MCF 10A (cell line): ENCODE measurements at regions of chr12 and their contacts with region 1.

Region 1: GRCh38 chr12:78146365-78146772 is 315.7 kb downstream of the NAV3 start:
- DNase-seq: peak; percentile 47
- H3K4me3 Mint-ChIP-seq: no peak overlapping the region
- H3K27ac Mint-ChIP-seq: no peak overlapping the region
- H3K4me1 Mint-ChIP-seq: no peaks in the 10 kb centered on the region
- H3K27me3 Mint-ChIP-seq: no peaks in the 10 kb centered on the region
- CTCF ChIP-seq: peak; percentile 62

Region 2: DNA sequence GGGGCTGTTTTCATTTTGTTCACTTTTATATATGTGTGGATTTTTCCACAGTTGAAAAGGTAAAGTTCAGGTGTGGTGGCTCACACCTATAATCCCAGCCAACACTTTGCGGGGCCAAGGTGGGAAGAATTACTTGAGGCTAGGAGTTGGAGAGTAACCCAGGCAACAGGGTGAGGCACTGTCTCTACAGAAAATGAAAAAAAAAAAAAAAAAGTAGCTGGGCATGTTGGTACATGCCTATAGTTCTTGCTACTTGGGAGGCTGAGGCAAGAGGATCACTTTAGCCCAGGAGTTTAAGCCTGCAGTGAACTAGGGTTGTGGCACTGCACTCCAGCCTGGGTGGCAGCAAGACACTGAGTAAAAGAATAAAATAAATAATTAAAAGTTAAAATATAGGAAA is 10.8 kb after region 1 on chr12:
- CTCF ChIA-PET with region 1: interaction called, 22 read pairs
- POLR2A ChIA-PET with region 1: no interaction called
- intact Hi-C with region 1: no loop called
- DNase-seq: peak; percentile 25
- H3K4me3 Mint-ChIP-seq: no peak overlapping the region
- H3K27ac Mint-ChIP-seq: peak overlapping the region; percentile 92
- H3K4me1 Mint-ChIP-seq: peaks cover 12% of the 10 kb centered on the region
- H3K27me3 Mint-ChIP-seq: no peaks in the 10 kb centered on the region
- CTCF ChIP-seq: no peak

Region 3: DNA sequence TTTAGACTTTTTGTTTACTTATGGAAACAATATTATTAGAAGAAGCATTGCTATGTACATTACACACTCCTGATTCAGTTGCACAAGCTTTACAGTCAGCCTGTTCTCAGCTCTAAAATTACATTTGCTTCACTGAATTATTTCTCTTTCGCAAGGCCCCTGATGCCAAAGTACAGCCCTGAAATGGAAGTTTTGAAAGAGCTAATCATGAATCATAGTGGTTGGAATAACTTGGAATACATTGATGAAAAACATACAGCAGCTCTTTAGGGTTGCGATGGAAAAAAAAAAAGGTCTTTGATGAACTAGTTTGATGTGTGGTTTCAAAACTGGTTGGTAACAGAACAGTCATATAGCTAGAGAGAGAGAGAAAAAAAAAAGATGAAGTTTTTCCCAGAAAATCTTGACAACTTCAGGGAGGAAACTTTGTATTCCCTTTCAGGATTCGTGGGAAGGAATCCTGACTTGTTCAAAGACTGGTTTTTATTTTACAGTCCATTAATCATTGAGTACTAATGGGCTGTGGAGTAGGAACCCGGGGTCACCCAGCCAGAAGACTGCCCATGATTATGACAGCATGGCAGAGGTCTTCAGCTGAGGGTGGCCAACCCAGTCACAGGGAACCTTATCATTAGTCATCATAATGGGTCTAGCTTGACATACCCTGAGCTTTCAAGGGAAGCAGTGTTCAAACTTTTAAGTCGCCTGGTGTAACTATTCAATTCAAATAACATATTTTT is 144.4 kb after region 1 on chr12:
- CTCF ChIA-PET with region 1: interaction called, 10 read pairs
- POLR2A ChIA-PET with region 1: no interaction called
- intact Hi-C with region 1: no loop called
- DNase-seq: peak; percentile 90
- H3K4me3 Mint-ChIP-seq: peak overlapping the region; percentile 9
- H3K27ac Mint-ChIP-seq: peak overlapping the region; percentile 94
- H3K4me1 Mint-ChIP-seq: peaks cover 25% of the 10 kb centered on the region
- H3K27me3 Mint-ChIP-seq: no peaks in the 10 kb centered on the region
- CTCF ChIP-seq: no peak

Region 4: DNA sequence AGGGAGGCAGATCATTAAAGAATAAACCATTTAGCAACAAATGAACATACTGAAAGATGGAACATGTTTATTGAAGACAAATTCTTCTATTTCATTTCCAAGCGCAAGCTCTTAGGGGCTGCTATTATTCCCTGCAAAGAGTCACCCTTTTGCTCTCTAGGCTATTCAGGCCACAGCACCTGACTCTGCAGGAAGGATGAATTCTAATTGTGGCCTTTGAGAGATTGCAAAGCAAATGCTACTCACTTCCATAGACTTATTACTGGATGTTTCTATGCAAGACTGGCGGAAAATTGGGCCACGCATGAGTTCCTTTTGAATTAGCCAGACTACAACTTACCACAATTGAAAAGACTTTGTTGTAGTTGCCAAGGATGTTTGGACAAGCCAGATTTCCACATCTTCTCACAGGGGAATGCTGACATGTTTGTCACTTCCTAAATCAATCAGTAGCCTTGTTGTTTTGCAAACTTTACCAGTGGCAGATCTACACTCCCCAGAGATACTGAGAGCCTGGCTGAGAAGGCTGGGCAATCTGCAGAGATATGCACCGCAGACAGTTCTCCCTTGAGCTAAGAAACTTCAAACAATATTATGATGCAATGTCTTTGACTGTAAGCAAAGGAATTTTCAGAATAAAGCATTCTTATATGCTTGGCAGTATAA is 383.9 kb after region 1 on chr12:
- CTCF ChIA-PET with region 1: no interaction called
- POLR2A ChIA-PET with region 1: no interaction called
- intact Hi-C with region 1: no loop called
- DNase-seq: peak; percentile 8
- H3K4me3 Mint-ChIP-seq: no peak overlapping the region
- H3K27ac Mint-ChIP-seq: no peak overlapping the region
- H3K4me1 Mint-ChIP-seq: no peaks in the 10 kb centered on the region
- H3K27me3 Mint-ChIP-seq: no peaks in the 10 kb centered on the region
- CTCF ChIP-seq: no peak